Tibial artery (tissue), 4 donors: ENCODE measurements at regions of chr13 and their contacts with region 1.

Region 1: DNA sequence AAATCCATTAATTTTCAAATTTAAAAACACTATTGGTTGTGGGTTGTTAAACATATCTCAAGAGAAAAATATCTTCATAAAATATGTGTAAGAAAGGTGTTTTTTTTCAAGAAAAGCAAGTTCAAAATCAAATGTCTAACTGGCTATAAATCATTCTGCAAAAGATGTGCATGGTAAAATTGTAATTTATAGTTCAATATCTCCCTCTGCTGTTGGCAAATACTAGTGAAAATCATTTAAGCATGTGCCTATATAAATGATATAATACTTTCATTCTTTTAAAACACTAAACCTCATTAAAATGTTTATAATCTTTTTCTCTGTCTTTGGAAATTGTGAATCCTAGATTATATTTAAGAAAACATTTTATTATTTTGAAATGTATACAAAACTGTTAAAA is 17.2 kb upstream of the SLITRK6 start:
- DNase-seq: no peak
- H3K4me3 ChIP-seq: no peak overlapping the region
- H3K27ac ChIP-seq: no peak overlapping the region
- H3K4me1 ChIP-seq: no peaks in the 10 kb centered on the region
- H3K27me3 ChIP-seq: no peaks in the 10 kb centered on the region
- CTCF ChIP-seq: no peak

Region 2: GRCh38 chr13:84896128-84896527 is 920.3 kb before region 1 on chr13:
- intact Hi-C with region 1: loop called (anchors 10 kb)
- DNase-seq: no peak
- H3K4me3 ChIP-seq: no peak overlapping the region
- H3K27ac ChIP-seq: no peak overlapping the region
- H3K4me1 ChIP-seq: no peaks in the 10 kb centered on the region
- H3K27me3 ChIP-seq: no peaks in the 10 kb centered on the region
- CTCF ChIP-seq: peak; percentile 41 to 53